Natural killer cell (primary cell): ENCODE measurements at regions of chr14 and their contacts with region 1.

Region 1: DNA sequence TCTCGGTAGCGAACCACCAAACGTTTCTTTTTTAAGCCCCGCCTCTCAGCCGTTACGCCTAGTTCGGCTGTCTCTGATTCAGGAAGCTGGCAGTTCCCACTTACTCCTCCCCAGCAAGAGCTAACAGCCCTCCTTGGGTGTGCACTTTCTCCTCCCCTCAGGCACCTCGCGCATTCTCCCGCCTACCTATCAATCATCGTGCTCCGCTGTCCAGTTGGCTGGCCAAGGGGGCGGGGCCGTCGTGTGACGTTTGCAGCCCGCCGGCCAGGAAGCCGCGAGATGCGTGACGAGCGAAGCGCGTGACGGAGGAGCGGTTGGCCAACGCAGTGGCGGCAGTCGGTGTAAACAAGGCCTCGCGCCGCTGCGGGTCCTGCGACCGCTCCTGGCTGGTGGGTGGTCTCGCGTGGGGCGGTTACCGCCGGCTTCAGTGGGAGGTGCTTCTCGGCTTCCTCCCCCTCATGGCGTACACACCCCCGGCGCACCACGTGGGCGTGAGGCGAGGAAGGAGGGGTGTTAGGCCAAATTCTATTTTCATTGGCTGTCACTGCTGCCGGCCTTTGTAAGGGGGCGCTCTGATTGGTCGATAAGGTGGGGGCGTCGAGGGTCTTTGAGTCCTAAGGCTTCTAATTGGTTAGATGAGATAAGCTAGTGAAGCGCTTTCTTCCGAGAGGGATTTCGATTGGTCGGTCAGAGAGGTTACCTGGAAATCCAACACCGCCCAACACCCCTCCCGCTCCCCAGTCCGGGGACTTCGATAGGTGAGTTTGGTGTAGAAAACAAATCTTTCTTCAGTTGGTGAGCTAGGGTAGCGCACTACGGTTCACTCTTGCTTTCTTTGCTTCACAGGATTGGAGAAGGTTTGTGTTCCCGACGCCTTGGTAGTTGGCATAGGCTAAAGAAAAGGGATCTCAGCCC is at the starts of genes DCAF11 and NRL:
- DNase-seq: peak; percentile 99
- ATAC-seq: peak; percentile 81 to 94 (median 83)
- H3K4me3 ChIP-seq: peak within 1 kb of the TSS; percentile 62
- H3K4me3 Mint-ChIP-seq: peak within 1 kb of the TSS; percentile 99
- H3K27ac ChIP-seq: peak within 1 kb of the TSS; percentile 100
- H3K27ac Mint-ChIP-seq: peak within 1 kb of the TSS; percentile 96 to 99
- H3K4me1 ChIP-seq: peaks cover 24% of the 10 kb centered on the region
- H3K4me1 Mint-ChIP-seq: peaks cover 22 to 27% of the 10 kb centered on the region in 2 donors
- H3K27me3 ChIP-seq: no peaks in the 10 kb centered on the region
- H3K27me3 Mint-ChIP-seq: no peaks in the 10 kb centered on the region
- CTCF ChIP-seq: no peak
- total RNA-seq, gene DCAF11: 77.5 to 99.3 (median 96.3) TPM
- total RNA-seq, gene NRL: 0.78 to 3.3 (median 2.8) TPM

Region 2: GRCh38 chr14:24051789-24052655 is 62.8 kb before region 1 on chr14 and contains the start of gene CARMIL3:
- intact Hi-C with region 1: loop called (anchors 2 kb)
- DNase-seq: peak; percentile 64 to 83
- ATAC-seq: peak; percentile 67 to 82 (median 78)
- H3K4me3 ChIP-seq: peak within 1 kb of the TSS; percentile 68
- H3K4me3 Mint-ChIP-seq: peak within 1 kb of the TSS; percentile 88
- H3K27ac ChIP-seq: no peak within 1 kb of the TSS
- H3K27ac Mint-ChIP-seq: peak within 1 kb of the TSS; percentile 69 to 90
- H3K4me1 ChIP-seq: peaks cover 33% of the 10 kb centered on the region
- H3K4me1 Mint-ChIP-seq: peaks cover 18 to 45% of the 10 kb centered on the region in 2 donors
- H3K27me3 ChIP-seq: no peaks in the 10 kb centered on the region
- H3K27me3 Mint-ChIP-seq: peaks cover 0 to 2% of the 10 kb centered on the region in 2 donors
- CTCF ChIP-seq: no peak
- total RNA-seq, gene CARMIL3: 17.8 to 28.6 (median 18.6) TPM

Region 3: DNA sequence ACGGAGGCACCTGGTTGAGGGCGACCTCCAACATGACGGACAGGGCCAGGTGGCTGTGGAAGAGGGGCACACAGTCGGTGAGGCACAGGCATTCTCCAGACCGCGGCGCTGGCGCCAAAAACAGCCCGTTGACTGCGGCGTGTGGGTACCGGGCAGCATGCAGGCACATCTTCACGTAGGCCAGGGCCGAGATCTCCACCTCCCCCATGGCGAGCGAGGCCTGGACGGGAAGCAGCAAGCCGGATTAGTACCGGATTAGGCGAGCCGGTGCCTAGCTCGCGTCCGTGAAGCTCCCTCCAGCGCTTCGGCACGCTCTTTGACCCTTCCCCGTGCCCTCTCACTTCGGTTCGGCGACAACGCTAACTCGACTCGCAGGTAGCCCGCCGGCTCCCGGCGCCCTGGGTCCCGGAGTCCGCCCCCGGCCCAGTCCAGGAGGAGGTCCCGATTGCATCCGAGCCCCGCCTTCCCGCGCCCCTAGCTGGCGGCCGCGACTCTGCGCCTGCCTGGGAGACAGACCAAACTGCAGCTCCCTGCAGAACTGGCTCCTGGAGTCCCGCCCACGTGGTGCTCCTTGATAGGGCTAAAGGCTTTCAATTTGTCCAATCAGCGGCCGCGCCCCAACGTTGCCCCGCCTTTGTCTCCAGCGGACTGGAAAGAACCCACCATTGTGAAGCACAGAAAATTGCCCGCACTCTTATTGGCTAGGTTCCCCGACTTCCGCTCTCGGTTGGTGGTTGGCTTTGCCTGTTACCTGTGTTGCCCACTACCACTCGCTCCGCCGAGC is 26.5 kb after region 1 on chr14 and contains the start of gene EMC9:
- intact Hi-C with region 1: loop called (anchors 1 kb)
- DNase-seq: peak; percentile 98 to 99
- ATAC-seq: peak; percentile 89 to 97 (median 91)
- H3K4me3 ChIP-seq: peak within 1 kb of the TSS; percentile 59
- H3K4me3 Mint-ChIP-seq: peak within 1 kb of the TSS; percentile 73
- H3K27ac ChIP-seq: peak within 1 kb of the TSS; percentile 75
- H3K27ac Mint-ChIP-seq: peak within 1 kb of the TSS; percentile 86 to 93
- H3K4me1 ChIP-seq: peaks cover 55% of the 10 kb centered on the region
- H3K4me1 Mint-ChIP-seq: peaks cover 54 to 73% of the 10 kb centered on the region in 2 donors
- H3K27me3 ChIP-seq: no peaks in the 10 kb centered on the region
- H3K27me3 Mint-ChIP-seq: no peaks in the 10 kb centered on the region
- CTCF ChIP-seq: peak; percentile 20
- total RNA-seq, gene EMC9: 9.3 to 12.3 (median 12.0) TPM

Region 4: DNA sequence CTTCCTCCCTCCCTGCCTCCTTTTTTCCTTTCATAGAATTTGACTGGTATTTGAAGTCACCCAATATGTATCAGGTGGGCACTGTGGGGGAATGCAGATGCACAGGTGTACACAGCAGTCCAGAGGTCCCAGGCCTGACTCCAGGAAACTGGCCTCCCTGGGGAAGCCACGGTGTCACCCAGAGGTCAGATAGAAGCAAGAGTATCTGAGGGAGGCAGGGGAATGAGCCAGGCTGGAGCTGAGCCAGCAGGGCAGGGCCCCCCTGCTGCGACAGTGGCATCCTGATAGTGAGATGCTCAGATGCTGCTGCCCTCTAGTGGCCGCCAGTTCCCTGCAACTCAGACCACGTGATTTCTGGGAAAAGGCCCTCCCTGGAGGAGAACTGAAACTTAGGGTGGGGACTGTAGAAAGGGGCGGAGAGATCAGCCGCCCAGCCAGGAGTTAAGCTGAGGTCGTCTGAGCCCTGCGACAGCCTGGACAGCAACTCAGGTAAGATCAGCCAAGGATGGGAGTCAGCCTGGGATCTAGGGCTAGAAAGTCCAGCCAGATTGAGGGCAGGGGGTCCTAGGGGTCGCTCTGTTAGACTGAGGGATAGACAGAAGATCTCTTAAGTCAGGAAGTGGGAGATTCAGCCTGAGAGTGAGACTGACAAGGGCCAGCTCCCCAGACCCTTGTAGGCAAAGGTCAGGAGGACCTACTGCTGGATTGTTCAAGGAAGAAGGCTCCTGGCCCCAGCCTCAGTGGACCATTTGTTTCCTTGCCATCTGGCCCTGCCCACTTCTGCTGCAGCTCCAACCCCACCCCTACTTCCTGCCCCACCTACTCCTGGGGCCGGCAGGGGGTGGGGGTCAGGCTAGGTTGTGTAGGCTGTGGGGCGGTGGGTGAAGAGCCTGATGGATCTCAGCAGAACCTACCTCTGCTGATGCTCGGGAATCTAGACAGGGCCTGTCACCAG is 46.3 kb after region 1 on chr14 and contains the start of gene IRF9:
- intact Hi-C with region 1: loop called (anchors 1 kb)
- DNase-seq: peak; percentile 93 to 99
- ATAC-seq: peak; percentile 91 to 97 (median 91)
- H3K4me3 ChIP-seq: peak within 1 kb of the TSS; percentile 94
- H3K4me3 Mint-ChIP-seq: peak within 1 kb of the TSS; percentile 99
- H3K27ac ChIP-seq: peak within 1 kb of the TSS; percentile 94
- H3K27ac Mint-ChIP-seq: peak within 1 kb of the TSS; percentile 97
- H3K4me1 ChIP-seq: peaks cover 37% of the 10 kb centered on the region
- H3K4me1 Mint-ChIP-seq: peaks cover 43 to 54% of the 10 kb centered on the region in 2 donors
- H3K27me3 ChIP-seq: no peaks in the 10 kb centered on the region
- H3K27me3 Mint-ChIP-seq: no peaks in the 10 kb centered on the region
- CTCF ChIP-seq: peak; percentile 85
- total RNA-seq, gene IRF9: 178 to 348 (median 319) TPM

Region 5: DNA sequence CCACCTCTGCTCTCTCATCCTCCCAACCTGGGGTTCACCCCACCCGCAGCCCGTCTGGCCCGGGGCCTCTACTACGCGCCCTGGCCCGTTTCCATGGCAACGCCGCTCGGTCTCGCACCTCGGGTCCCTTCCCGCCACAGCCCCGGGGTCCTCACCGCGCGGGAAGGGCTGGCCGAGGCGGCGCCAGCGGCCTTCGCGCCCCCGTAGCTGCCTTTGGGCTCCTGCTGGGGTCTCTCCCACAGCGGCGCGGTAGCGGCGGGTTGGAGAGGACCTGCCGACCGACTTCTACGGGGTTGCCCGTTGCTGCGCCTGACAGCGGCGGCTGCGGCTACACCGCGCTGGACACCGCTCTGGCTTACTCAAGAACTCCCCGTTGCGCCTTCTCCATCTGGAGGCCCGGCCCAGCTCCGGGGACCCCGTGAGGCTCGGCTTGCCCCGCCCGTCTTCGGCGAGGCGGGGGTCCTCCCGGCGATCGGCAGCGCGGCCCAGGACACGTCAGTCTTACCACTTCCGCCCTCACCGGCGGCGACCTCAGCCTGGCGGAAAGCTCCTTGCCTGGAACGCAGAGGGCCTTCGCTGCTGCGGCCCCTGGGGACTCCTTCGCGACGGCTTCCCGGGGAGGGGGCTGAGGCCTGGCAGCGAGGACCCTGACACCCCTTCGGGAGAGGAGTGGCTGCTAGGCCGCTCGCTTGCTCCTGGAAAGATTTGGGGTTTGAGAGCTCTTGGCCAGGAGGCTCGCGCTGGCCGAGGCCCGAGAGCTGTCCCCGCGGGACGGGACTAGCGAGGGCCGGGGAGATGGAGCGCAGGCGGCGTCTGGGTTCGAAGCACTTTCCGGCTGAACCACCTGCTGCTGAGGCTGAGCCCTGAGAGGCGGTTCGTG is 80.6 kb after region 1 on chr14 and contains the start of gene TM9SF1:
- intact Hi-C with region 1: no loop called
- DNase-seq: peak; percentile 92 to 95
- ATAC-seq: peak; percentile 82 to 92 (median 84)
- H3K4me3 ChIP-seq: peak within 1 kb of the TSS; percentile 92
- H3K4me3 Mint-ChIP-seq: peak within 1 kb of the TSS; percentile 85
- H3K27ac ChIP-seq: peak within 1 kb of the TSS; percentile 99
- H3K27ac Mint-ChIP-seq: peak within 1 kb of the TSS; percentile 91 to 96
- H3K4me1 ChIP-seq: peaks cover 30% of the 10 kb centered on the region
- H3K4me1 Mint-ChIP-seq: peaks cover 42 to 52% of the 10 kb centered on the region in 2 donors
- H3K27me3 ChIP-seq: no peaks in the 10 kb centered on the region
- H3K27me3 Mint-ChIP-seq: no peaks in the 10 kb centered on the region
- CTCF ChIP-seq: no peak
- total RNA-seq, gene TM9SF1: 15.2 to 32.1 (median 28.7) TPM

Region 6: GRCh38 chr14:24215495-24216344 is 100.9 kb after region 1 on chr14 and contains the start of gene MDP1:
- intact Hi-C with region 1: loop called (anchors 1 kb)
- DNase-seq: peak; percentile 81 to 96
- ATAC-seq: peak; percentile 74 to 86 (median 74)
- H3K4me3 ChIP-seq: peak within 1 kb of the TSS; percentile 63
- H3K4me3 Mint-ChIP-seq: peak within 1 kb of the TSS; percentile 90
- H3K27ac ChIP-seq: peak within 1 kb of the TSS; percentile 82
- H3K27ac Mint-ChIP-seq: peak within 1 kb of the TSS; percentile 98 to 99
- H3K4me1 ChIP-seq: peaks cover 30% of the 10 kb centered on the region
- H3K4me1 Mint-ChIP-seq: peaks cover 48 to 50% of the 10 kb centered on the region in 2 donors
- H3K27me3 ChIP-seq: no peaks in the 10 kb centered on the region
- H3K27me3 Mint-ChIP-seq: no peaks in the 10 kb centered on the region
- CTCF ChIP-seq: peak; percentile 61
- total RNA-seq, gene MDP1: 4.0 to 6.1 (median 5.5) TPM

Region 7: DNA sequence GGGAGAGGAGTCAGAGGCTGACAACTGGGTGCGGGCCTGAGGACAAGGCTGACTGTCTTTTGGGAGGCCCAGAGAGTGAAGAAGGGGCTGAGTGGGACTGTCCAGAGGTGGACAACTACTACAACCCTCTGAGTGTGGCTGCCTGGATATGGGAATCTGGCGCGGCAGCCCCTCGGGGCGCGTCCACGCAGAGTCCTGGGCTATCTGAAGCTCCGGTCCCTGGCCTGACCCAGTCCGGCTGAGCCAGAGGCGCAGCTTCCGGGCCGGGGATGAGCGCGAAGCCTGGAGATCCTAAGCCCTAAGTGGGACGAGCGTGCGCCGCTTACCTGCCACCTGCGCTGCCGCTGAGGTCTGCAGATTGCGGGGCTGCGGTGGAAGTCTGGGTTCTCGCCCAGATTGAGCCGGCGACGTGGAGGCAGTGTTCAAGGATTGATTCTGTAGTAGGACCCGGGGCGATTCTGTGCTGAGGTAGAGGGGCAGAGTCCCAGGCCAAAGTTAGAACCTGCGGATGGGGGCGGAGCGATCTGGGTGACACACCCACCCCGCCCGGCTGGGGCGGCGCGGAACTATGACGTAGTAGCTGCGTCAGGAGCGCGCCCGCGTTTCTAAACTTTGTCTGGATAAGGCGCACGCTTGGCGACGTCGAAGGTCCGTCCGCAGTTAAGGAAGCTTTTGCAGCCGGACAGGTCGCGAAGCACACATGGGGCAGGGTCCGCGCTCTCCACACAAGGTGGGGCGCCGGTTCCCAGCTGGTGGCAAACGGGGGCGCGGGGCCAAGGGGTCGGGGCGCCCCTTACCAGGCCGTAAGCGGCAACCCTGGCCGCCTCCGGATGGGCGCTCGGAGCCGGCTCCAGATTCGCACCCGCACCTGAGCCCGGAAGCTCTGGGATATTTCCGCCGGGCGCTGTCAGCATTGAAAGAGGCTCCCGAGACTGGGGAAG is 184.7 kb after region 1 on chr14 and contains the starts of genes DHRS1 and NOP9:
- intact Hi-C with region 1: loop called (anchors 1 kb)
- DNase-seq: peak; percentile 95 to 96
- ATAC-seq: peak; percentile 79 to 89 (median 82)
- H3K4me3 ChIP-seq: peak within 1 kb of the TSS; percentile 51
- H3K4me3 Mint-ChIP-seq: peak within 1 kb of the TSS; percentile 91
- H3K27ac ChIP-seq: peak within 1 kb of the TSS; percentile 61
- H3K27ac Mint-ChIP-seq: peak within 1 kb of the TSS; percentile 91 to 92
- H3K4me1 ChIP-seq: peaks cover 25% of the 10 kb centered on the region
- H3K4me1 Mint-ChIP-seq: peaks cover 42 to 55% of the 10 kb centered on the region in 2 donors
- H3K27me3 ChIP-seq: no peaks in the 10 kb centered on the region
- H3K27me3 Mint-ChIP-seq: no peaks in the 10 kb centered on the region
- CTCF ChIP-seq: no peak
- total RNA-seq, gene DHRS1: 39.8 to 59.0 (median 43.3) TPM
- total RNA-seq, gene NOP9: 34.9 to 47.8 (median 39.2) TPM